Spleen (tissue), 13 donors: ENCODE measurements at regions of chr20 and their contacts with region 1.

Region 1: DNA sequence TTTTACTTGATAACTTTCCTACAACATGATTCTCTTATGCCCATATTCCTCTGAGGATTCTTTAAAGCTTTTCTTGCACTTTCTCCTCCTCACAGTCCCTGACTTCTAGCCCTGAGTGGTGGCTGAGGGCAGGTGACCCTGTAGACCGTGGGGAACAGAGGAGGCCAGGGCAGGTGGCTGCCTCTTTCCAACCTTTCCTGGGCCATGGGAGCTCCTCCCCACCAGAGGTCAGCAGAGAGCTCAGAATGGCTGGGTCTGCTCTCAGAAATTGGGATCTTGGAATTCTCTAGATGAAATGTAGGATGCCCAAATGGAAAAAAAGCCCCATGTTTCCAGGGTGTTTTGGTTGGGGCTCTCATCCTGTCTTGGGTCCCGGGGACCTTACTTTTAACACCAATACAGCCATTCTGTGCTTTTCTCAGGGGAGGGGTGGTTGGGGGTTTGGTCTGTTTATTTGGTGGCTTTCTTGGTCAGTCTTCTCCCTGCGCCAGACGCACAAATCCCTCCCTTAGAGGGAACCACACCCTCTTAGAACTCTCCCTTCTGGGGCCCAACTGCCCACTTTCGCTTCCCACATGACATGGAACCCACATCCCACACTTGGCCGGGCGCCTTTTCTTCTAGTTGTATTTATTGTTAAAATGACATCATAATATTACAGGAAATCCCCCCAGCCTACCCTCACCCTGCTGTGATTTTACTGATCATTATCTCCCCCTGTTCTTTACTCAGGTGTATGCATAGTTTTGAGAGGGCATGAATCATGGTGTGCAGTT is 17.9 kb downstream of the GNAS start:
- DNase-seq: peak; percentile 84
- H3K4me3 ChIP-seq: no peak overlapping the region
- H3K27ac ChIP-seq: no peak overlapping the region
- H3K4me1 ChIP-seq: peaks cover 0 to 10% (median 6%) of the 10 kb centered on the region in 6 donors
- H3K27me3 ChIP-seq: no peaks in the 10 kb centered on the region
- CTCF ChIP-seq: peak; percentile 74 to 92 (median 86)
- POLR2A ChIP-seq: no peak

Region 2: GRCh38 chr20:58598211-58599014 is 272.0 kb before region 1 on chr20:
- intact Hi-C with region 1: no loop called
- DNase-seq: peak; percentile 34
- H3K4me3 ChIP-seq: no peak overlapping the region
- H3K27ac ChIP-seq: no peak overlapping the region
- H3K4me1 ChIP-seq: no peaks in the 10 kb centered on the region
- H3K27me3 ChIP-seq: peaks cover 0 to 10% (median 0%) of the 10 kb centered on the region in 7 donors
- CTCF ChIP-seq: no peak
- POLR2A ChIP-seq: no peak

Region 3: GRCh38 chr20:59207742-59208357 is 337.4 kb after region 1 on chr20:
- intact Hi-C with region 1: loop called (anchors 5 kb)
- DNase-seq: peak; percentile 90
- H3K4me3 ChIP-seq: no peak overlapping the region
- H3K27ac ChIP-seq: no peak overlapping the region
- H3K4me1 ChIP-seq: peaks cover 0 to 14% (median 0%) of the 10 kb centered on the region in 6 donors
- H3K27me3 ChIP-seq: no peaks in the 10 kb centered on the region
- CTCF ChIP-seq: peak; percentile 62 to 87 (median 75)
- POLR2A ChIP-seq: no peak

Region 4: DNA sequence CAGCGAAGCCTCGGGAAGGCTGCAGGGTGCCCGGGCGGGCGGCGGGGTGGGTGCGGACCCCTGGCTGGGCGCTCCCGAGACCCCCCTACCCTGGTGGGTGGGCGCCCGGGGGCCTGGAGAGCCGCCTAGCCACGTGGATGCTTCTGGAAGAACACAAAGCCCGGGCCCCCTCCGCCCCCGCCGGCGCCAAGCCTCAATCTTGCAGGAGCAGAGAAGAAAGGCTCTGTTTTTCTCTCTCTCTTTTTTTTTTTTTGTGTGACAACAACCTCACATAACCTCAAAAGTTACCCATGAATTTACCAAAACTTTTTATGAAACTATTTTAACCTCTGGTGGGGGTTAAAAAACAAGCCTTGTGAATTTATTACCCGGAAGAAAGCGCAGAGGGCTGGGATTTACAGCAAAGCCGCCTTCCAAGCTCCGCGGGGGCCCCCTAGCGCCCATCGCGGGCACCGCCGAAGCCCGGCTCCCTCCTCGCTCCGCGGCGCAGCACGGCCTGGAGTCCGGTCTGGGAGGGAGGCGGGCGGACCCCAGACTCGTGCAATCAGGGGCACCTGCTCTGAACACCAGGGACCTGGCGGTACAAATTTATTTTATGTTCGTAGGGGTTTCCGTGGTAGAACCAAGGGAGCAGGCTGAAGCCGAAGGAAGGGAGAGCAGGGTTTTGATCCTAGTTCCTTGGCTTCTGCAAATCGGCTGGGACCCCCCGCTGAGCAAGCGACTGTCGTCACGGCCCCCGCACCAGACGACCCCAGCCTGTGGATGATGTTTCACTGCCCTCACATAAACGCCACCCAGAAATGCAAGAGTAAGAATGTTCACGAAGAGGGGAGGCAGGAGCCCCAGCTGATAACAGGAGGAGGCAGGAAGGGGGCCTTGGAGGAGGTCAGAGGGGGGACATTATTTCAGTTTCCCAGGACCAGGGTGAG is 352.1 kb after region 1 on chr20:
- intact Hi-C with region 1: loop called (anchors 5 kb)
- DNase-seq: peak; percentile 95
- H3K4me3 ChIP-seq: peak overlapping the region; percentile 37 to 70 (median 48)
- H3K27ac ChIP-seq: peak overlapping the region in 7 of 8 donors; percentile 2 to 75 (median 39)
- H3K4me1 ChIP-seq: peaks cover 10 to 30% (median 21%) of the 10 kb centered on the region in 6 donors
- H3K27me3 ChIP-seq: peaks cover 0 to 28% (median 7%) of the 10 kb centered on the region in 7 donors
- CTCF ChIP-seq: peak; percentile 77 to 98 (median 95)
- POLR2A ChIP-seq: no peak

Region 5: GRCh38 chr20:59403261-59403961 is 533.0 kb after region 1 on chr20:
- intact Hi-C with region 1: loop called (anchors 5 kb)
- DNase-seq: peak; percentile 90
- H3K4me3 ChIP-seq: peak overlapping the region in 2 of 8 donors; percentile 15 to 54
- H3K27ac ChIP-seq: no peak overlapping the region
- H3K4me1 ChIP-seq: peaks cover 11 to 25% (median 18%) of the 10 kb centered on the region in 6 donors
- H3K27me3 ChIP-seq: peaks cover 3 to 77% (median 36%) of the 10 kb centered on the region in 7 donors
- CTCF ChIP-seq: peak; percentile 90 to 98 (median 92)
- POLR2A ChIP-seq: no peak

Region 6: GRCh38 chr20:59495894-59496510 is 625.6 kb after region 1 on chr20:
- intact Hi-C with region 1: loop called (anchors 5 kb)
- DNase-seq: peak; percentile 87
- H3K4me3 ChIP-seq: no peak overlapping the region
- H3K27ac ChIP-seq: no peak overlapping the region
- H3K4me1 ChIP-seq: peaks cover 0 to 5% (median 0%) of the 10 kb centered on the region in 6 donors
- H3K27me3 ChIP-seq: peaks cover 0 to 54% (median 10%) of the 10 kb centered on the region in 7 donors
- CTCF ChIP-seq: peak; percentile 31 to 94 (median 82)
- POLR2A ChIP-seq: no peak